MCF 10A (cell line): ENCODE measurements at regions of chr5 and their contacts with region 1.

Region 1: GRCh38 chr5:107542428-107542827 is 128.3 kb downstream of the EFNA5 start:
- DNase-seq: peak; percentile 99
- H3K4me3 Mint-ChIP-seq: peak overlapping the region; percentile 64
- H3K27ac Mint-ChIP-seq: peak overlapping the region; percentile 92
- H3K4me1 Mint-ChIP-seq: peaks cover 46% of the 10 kb centered on the region
- H3K27me3 Mint-ChIP-seq: no peaks in the 10 kb centered on the region
- CTCF ChIP-seq: no peak

Region 2: DNA sequence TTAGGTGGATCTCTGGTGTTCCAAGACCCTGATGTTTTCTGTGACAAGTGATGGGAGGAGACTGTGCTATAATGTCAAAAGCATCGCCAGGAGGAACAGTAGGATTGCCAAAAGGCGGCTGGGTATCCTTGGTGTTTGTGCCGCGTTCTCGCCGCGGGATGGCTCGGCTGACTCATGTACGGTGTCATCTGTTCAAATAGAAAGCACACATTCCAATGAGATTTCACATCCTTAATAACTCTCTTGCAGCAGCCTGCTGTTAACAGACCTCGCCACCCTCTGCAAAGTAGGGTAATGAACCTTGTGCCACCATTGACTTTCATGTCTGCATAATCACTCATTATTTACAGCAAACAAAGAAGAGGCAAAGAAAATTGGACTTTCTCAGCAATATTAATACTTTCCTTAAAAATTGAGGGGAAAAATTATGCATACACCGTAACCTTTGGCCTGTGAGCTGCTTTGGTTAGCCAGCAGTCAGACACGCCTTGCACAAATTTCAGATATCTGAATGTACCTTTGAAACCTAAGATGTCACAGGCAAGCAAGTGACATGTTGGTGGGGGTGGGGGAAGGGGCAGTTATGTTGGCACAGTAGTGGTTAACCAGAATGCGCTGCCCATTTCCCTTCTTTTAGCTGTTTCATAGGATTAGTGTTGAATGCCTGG is 161.1 kb before region 1 on chr5:
- CTCF ChIA-PET with region 1: no interaction called
- POLR2A ChIA-PET with region 1: interaction called, 4 read pairs
- intact Hi-C with region 1: loop called (anchors 2 kb)
- DNase-seq: peak; percentile 87
- H3K4me3 Mint-ChIP-seq: peak overlapping the region; percentile 29
- H3K27ac Mint-ChIP-seq: peak overlapping the region; percentile 78
- H3K4me1 Mint-ChIP-seq: peaks cover 41% of the 10 kb centered on the region
- H3K27me3 Mint-ChIP-seq: no peaks in the 10 kb centered on the region
- CTCF ChIP-seq: no peak

Region 3: DNA sequence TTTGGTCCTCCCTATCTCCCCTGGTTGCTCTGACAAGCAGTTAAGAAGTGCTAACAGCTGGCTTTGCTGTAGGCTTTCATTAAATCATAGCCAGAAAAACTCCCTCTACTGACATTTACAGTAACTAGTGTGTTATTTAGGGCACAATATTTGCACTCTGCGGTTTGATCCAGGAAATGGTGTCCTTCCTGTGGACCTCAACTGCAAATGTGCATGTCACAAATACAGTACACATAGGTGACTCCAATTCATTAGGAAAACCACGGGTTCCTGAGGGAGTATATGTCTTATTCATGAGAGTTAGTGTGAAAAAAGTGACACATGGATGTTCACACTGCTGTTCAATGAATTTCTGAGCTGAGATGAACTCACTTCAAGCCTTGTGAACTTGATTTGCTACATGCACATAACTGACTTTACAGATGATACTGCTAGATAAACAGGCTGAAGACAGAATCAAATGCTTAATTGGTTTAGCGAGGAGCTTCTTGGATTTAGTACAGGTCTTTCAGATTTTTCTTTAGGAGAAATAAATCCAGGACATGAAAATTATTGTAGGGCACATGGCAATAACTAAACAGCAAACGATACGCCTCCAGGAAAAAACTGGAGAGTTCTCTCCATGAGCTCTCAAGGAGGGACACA is 153.2 kb before region 1 on chr5:
- CTCF ChIA-PET with region 1: interaction called, 3 read pairs
- POLR2A ChIA-PET with region 1: interaction called, 18 read pairs
- intact Hi-C with region 1: loop called (anchors 1 kb)
- DNase-seq: peak; percentile 67
- H3K4me3 Mint-ChIP-seq: no peak overlapping the region
- H3K27ac Mint-ChIP-seq: peak overlapping the region; percentile 75
- H3K4me1 Mint-ChIP-seq: peaks cover 45% of the 10 kb centered on the region
- H3K27me3 Mint-ChIP-seq: no peaks in the 10 kb centered on the region
- CTCF ChIP-seq: no peak

Region 4: GRCh38 chr5:107425541-107426256 is 116.7 kb before region 1 on chr5:
- CTCF ChIA-PET with region 1: no interaction called
- POLR2A ChIA-PET with region 1: interaction called, 20 read pairs
- intact Hi-C with region 1: loop called (anchors 5 kb)
- DNase-seq: peak; percentile 82
- H3K4me3 Mint-ChIP-seq: peak overlapping the region; percentile 40
- H3K27ac Mint-ChIP-seq: peak overlapping the region; percentile 88
- H3K4me1 Mint-ChIP-seq: peaks cover 39% of the 10 kb centered on the region
- H3K27me3 Mint-ChIP-seq: no peaks in the 10 kb centered on the region
- CTCF ChIP-seq: no peak

Region 5: DNA sequence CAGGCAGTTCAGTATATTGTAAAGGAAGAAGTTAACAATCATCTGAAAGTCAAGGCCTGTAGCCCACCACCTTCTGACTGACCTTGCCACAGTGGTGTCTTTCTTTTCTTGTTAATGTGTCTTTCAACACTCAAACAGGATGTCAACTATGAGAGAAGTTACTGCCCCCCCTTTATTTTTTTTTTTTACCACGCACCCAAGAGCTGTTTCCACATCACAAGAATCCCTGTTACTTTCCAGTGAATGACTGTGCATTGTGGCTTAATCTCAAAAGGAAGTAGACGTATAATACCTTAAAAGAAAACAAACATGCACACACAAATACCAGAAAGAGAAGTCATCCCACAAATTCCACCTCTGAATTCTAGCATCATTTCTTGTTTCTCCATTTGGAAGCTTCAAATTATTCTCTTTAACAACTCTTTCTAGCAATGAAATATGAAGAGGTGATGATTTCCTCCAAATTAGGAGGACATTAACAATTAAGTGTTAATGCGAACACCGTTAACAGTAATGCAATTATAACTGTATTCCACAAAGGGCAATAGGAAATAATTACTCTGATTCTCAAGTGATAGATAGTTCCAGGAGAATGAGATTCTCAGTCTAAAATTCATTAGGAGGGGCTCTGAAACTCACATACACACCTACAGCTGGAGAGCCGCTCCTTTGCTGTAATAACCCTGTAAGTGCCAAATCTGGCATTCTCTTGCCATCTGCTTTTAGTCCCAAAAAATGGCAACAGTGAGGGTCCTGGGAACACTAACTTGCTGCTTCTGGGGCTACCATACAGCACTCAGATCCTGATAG is 72.7 kb before region 1 on chr5:
- CTCF ChIA-PET with region 1: interaction called, 3 read pairs
- POLR2A ChIA-PET with region 1: interaction called, 42 read pairs
- intact Hi-C with region 1: loop called (anchors 5 kb)
- DNase-seq: peak; percentile 94
- H3K4me3 Mint-ChIP-seq: peak overlapping the region; percentile 47
- H3K27ac Mint-ChIP-seq: peak overlapping the region; percentile 93
- H3K4me1 Mint-ChIP-seq: peaks cover 77% of the 10 kb centered on the region
- H3K27me3 Mint-ChIP-seq: no peaks in the 10 kb centered on the region
- CTCF ChIP-seq: no peak

Region 6: GRCh38 chr5:107523029-107523680 is 19.3 kb before region 1 on chr5:
- CTCF ChIA-PET with region 1: interaction called, 4 read pairs
- POLR2A ChIA-PET with region 1: interaction called, 12 read pairs
- intact Hi-C with region 1: no loop called
- DNase-seq: no peak
- H3K4me3 Mint-ChIP-seq: no peak overlapping the region
- H3K27ac Mint-ChIP-seq: peak overlapping the region; percentile 16
- H3K4me1 Mint-ChIP-seq: peaks cover 43% of the 10 kb centered on the region
- H3K27me3 Mint-ChIP-seq: no peaks in the 10 kb centered on the region
- CTCF ChIP-seq: no peak

Region 7: DNA sequence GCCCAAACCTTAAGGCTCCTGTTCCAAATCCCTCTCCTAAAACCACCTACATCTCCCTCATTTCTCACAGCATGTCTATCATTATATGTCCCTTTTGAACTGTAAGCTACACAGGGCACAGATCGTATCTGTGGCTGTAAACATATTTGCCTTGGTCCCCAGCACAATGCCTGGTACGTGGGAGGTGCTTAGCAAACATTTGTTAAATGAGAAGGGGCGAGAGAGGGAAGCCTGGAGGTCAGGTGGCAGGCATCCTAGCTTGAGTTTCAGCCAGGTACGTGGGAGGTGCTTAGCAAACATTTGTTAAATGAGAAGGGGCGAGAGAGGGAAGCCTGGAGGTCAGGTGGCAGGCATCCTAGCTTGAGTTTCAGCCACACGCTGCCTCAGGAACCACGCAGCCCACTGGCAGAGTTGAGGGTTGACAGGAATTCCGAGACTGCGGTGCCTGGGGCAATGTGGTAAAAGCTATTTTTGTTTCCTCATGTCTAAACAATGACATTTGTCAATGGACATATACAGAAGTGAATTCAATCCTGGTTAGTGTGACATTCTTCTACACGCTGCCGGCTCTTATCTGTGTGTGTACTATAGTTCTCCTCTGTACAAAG is 14.7 kb after region 1 on chr5:
- CTCF ChIA-PET with region 1: interaction called, 7 read pairs
- POLR2A ChIA-PET with region 1: interaction called, 63 read pairs
- intact Hi-C with region 1: no loop called
- DNase-seq: peak; percentile 92
- H3K4me3 Mint-ChIP-seq: peak overlapping the region; percentile 20
- H3K27ac Mint-ChIP-seq: peak overlapping the region; percentile 77
- H3K4me1 Mint-ChIP-seq: peaks cover 50% of the 10 kb centered on the region
- H3K27me3 Mint-ChIP-seq: no peaks in the 10 kb centered on the region
- CTCF ChIP-seq: no peak

Region 8: GRCh38 chr5:108451269-108451668 is 908.8 kb after region 1 on chr5:
- CTCF ChIA-PET with region 1: no interaction called
- POLR2A ChIA-PET with region 1: no interaction called
- intact Hi-C with region 1: no loop called
- DNase-seq: no peak
- H3K4me3 Mint-ChIP-seq: no peak overlapping the region
- H3K27ac Mint-ChIP-seq: no peak overlapping the region
- H3K4me1 Mint-ChIP-seq: peaks cover 6% of the 10 kb centered on the region
- H3K27me3 Mint-ChIP-seq: no peaks in the 10 kb centered on the region
- CTCF ChIP-seq: no peak